Naive thymus-derived CD4-positive, alpha-beta T cell (primary cell): ENCODE measurements at regions of chr12 and their contacts with region 1.

Region 1: GRCh38 chr12:112992541-112993398 is 14.5 kb downstream of the OAS2 start:
- DNase-seq: peak in 8 of 9 donors; percentile 29 to 58 (median 49)
- ATAC-seq: peak; percentile 83
- H3K4me3 ChIP-seq: no peak overlapping the region
- H3K4me3 Mint-ChIP-seq: peak overlapping the region in 1 of 10 donors; percentile 25
- H3K27ac ChIP-seq: no peak overlapping the region
- H3K27ac Mint-ChIP-seq: peak overlapping the region in 7 of 9 donors; percentile 5 to 72 (median 50)
- H3K4me1 ChIP-seq: peaks cover 0 to 5% of the 10 kb centered on the region in 2 donors
- H3K4me1 Mint-ChIP-seq: peaks cover 11 to 62% (median 21%) of the 10 kb centered on the region in 7 donors
- H3K27me3 ChIP-seq: no peaks in the 10 kb centered on the region
- H3K27me3 Mint-ChIP-seq: no peaks in the 10 kb centered on the region

Region 2: GRCh38 chr12:112978163-112979040 is 14.4 kb before region 1 on chr12 and contains the start of gene OAS2:
- CTCF ChIA-PET with region 1: interaction called, 61 read pairs
- POLR2A ChIA-PET with region 1: interaction called, 36 read pairs
- intact Hi-C with region 1: loop called (anchors 1 kb)
- DNase-seq: peak; percentile 35 to 89 (median 85)
- ATAC-seq: peak; percentile 97
- H3K4me3 ChIP-seq: peak within 1 kb of the TSS; percentile 99
- H3K4me3 Mint-ChIP-seq: peak within 1 kb of the TSS; percentile 87 to 100 (median 96)
- H3K27ac ChIP-seq: peak within 1 kb of the TSS; percentile 89
- H3K27ac Mint-ChIP-seq: peak within 1 kb of the TSS; percentile 97 to 100 (median 99)
- H3K4me1 ChIP-seq: peaks cover 34 to 37% of the 10 kb centered on the region in 2 donors
- H3K4me1 Mint-ChIP-seq: peaks cover 30 to 59% (median 42%) of the 10 kb centered on the region in 7 donors
- H3K27me3 ChIP-seq: no peaks in the 10 kb centered on the region
- H3K27me3 Mint-ChIP-seq: no peaks in the 10 kb centered on the region
- total RNA-seq, gene OAS2: 29.9 to 238 (median 66.0) TPM

Region 3: GRCh38 chr12:113030875-113031525 is 38.2 kb after region 1 on chr12:
- CTCF ChIA-PET with region 1: interaction called, 8 read pairs
- POLR2A ChIA-PET with region 1: no interaction called
- intact Hi-C with region 1: loop called in 1 of 2 experiments (anchors 1 kb)
- DNase-seq: peak in 4 of 9 donors; percentile 12 to 30 (median 14)
- ATAC-seq: peak; percentile 63
- H3K4me3 ChIP-seq: no peak overlapping the region
- H3K4me3 Mint-ChIP-seq: no peak overlapping the region
- H3K27ac ChIP-seq: no peak overlapping the region
- H3K27ac Mint-ChIP-seq: peak overlapping the region in 1 of 9 donors; percentile 28
- H3K4me1 ChIP-seq: no peaks in the 10 kb centered on the region
- H3K4me1 Mint-ChIP-seq: peaks cover 0 to 8% (median 3%) of the 10 kb centered on the region in 7 donors
- H3K27me3 ChIP-seq: no peaks in the 10 kb centered on the region
- H3K27me3 Mint-ChIP-seq: peaks cover 0 to 24% (median 0%) of the 10 kb centered on the region in 5 donors

Region 4: DNA sequence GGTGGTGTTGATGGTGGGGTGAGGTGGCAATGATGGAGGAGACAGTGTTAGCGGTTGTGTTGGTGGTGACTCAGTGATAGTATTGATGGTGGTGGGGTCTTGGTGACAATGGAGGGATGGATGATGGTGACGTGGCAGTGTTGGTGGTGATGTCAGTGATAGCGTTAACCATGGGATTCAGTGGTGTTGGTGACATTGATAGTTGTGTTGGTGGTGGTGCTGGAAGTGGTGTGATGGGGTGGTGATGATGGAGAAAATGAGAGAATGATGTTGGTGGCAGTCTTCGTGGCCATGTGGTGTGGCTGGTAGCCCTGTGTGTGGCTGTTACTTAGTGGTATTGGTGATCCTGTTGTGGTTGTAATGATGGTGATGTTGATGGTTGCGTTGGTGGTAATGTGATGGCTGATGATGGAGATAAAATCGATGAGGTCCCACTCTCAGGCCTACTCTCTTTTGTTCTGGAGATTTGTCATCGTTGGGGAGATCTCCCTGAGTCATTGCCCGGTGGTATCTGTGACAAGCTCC is 66.4 kb after region 1 on chr12:
- CTCF ChIA-PET with region 1: no interaction called
- POLR2A ChIA-PET with region 1: no interaction called
- intact Hi-C with region 1: no loop called
- DNase-seq: no peak
- ATAC-seq: no peak
- H3K4me3 ChIP-seq: no peak overlapping the region
- H3K4me3 Mint-ChIP-seq: no peak overlapping the region
- H3K27ac ChIP-seq: peak overlapping the region; percentile 10
- H3K27ac Mint-ChIP-seq: no peak overlapping the region
- H3K4me1 ChIP-seq: peaks cover 4 to 51% of the 10 kb centered on the region in 2 donors
- H3K4me1 Mint-ChIP-seq: peaks cover 0 to 58% (median 28%) of the 10 kb centered on the region in 7 donors
- H3K27me3 ChIP-seq: no peaks in the 10 kb centered on the region
- H3K27me3 Mint-ChIP-seq: peaks cover 0 to 23% (median 0%) of the 10 kb centered on the region in 5 donors

Region 5: DNA sequence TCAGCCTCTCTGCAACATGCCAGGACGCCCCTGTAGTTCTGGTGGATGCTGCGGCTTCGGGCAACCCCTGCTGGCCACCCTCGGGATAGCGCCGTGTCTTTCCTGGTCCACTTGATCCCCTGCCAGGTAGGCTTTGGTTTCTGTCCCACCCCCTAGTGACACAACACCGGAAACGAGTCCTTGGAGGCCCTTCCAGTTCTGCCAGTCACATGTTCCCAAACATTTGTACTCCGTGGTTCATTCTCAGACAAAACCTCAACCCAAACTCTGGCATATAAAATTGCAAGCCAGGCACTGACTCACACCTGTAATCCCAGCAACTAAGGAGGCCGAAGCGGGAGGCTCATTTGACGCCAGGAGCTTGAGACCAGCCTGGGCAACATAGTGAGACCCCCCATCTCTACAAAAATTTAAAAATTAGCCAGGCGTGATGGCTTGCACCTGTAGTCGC is 105.7 kb after region 1 on chr12:
- CTCF ChIA-PET with region 1: interaction called, 7 read pairs
- POLR2A ChIA-PET with region 1: no interaction called
- intact Hi-C with region 1: loop called (anchors 1 to 5 kb)
- DNase-seq: peak; percentile 42 to 70 (median 61)
- ATAC-seq: peak; percentile 83
- H3K4me3 ChIP-seq: no peak overlapping the region
- H3K4me3 Mint-ChIP-seq: no peak overlapping the region
- H3K27ac ChIP-seq: peak overlapping the region; percentile 34
- H3K27ac Mint-ChIP-seq: peak overlapping the region in 8 of 9 donors; percentile 31 to 92 (median 70)
- H3K4me1 ChIP-seq: peaks cover 0 to 18% of the 10 kb centered on the region in 2 donors
- H3K4me1 Mint-ChIP-seq: peaks cover 0 to 43% (median 33%) of the 10 kb centered on the region in 7 donors
- H3K27me3 ChIP-seq: no peaks in the 10 kb centered on the region
- H3K27me3 Mint-ChIP-seq: no peaks in the 10 kb centered on the region

Region 6: DNA sequence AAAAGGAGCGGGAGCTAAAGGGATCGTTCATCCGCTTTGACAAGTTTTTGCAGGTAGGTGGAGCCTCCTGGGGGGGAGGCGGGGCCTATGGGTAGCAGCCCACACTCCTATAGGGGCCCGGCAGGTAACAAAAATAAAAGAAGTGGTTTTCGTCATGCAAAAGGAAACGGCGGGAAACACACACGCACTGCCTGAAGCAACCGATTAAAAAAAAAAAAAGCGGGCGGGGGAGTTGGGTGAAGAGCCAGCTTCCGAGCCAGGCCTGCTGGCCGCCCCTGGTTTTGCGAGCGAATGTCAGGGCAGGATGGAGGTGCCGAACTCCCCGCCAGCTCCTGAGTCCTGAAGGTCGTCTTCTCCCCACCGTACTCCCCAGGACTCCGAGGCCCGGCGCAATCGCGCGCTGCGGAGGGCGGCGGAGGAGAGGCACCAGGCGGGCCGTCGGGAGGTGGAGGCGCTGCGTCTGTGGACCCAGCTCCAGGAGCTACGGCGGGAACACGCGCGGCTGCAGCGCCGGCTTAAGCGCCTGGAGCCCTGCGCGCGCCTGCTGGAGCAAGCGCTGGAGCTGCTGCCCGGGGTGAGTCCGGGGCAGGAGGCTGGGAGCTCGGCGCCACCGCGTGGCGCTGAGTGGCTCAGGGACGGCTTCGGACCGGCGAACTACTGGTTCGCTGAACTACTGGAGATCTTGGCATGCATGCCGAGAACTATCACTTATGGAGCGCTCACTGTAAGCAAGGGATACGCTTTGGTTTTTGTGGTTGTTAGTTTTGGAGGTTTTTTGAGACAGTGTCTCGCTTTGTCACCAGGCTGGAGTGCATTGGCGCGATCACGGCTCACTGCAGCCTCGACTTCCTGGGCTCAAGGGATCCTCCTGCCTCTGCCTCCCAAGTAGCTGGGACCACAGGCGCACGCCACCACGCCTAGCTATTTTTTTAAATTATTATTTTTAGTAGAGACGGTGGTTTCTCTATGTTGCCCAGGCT is 160.4 kb after region 1 on chr12:
- CTCF ChIA-PET with region 1: interaction called, 7 read pairs
- POLR2A ChIA-PET with region 1: no interaction called
- intact Hi-C with region 1: loop called in 1 of 2 experiments (anchors 2 kb)
- DNase-seq: peak; percentile 36 to 86 (median 80)
- ATAC-seq: peak; percentile 94
- H3K4me3 ChIP-seq: peak overlapping the region; percentile 75
- H3K4me3 Mint-ChIP-seq: peak overlapping the region; percentile 76 to 88 (median 86)
- H3K27ac ChIP-seq: no peak overlapping the region
- H3K27ac Mint-ChIP-seq: peak overlapping the region in 6 of 9 donors; percentile 76 to 93 (median 85)
- H3K4me1 ChIP-seq: peaks cover 0 to 19% of the 10 kb centered on the region in 2 donors
- H3K4me1 Mint-ChIP-seq: peaks cover 0 to 27% (median 25%) of the 10 kb centered on the region in 7 donors
- H3K27me3 ChIP-seq: no peaks in the 10 kb centered on the region
- H3K27me3 Mint-ChIP-seq: peaks cover 0 to 36% (median 0%) of the 10 kb centered on the region in 5 donors

Region 7: GRCh38 chr12:113174461-113175384 is 182.0 kb after region 1 on chr12:
- CTCF ChIA-PET with region 1: interaction called, 21 read pairs
- POLR2A ChIA-PET with region 1: no interaction called
- intact Hi-C with region 1: loop called in 1 of 2 experiments (anchors 1 kb)
- DNase-seq: peak; percentile 52 to 84 (median 66)
- ATAC-seq: peak; percentile 92
- H3K4me3 ChIP-seq: no peak overlapping the region
- H3K4me3 Mint-ChIP-seq: no peak overlapping the region
- H3K27ac ChIP-seq: no peak overlapping the region
- H3K27ac Mint-ChIP-seq: peak overlapping the region in 5 of 9 donors; percentile 2 to 77 (median 55)
- H3K4me1 ChIP-seq: no peaks in the 10 kb centered on the region
- H3K4me1 Mint-ChIP-seq: peaks cover 2 to 10% (median 6%) of the 10 kb centered on the region in 7 donors
- H3K27me3 ChIP-seq: no peaks in the 10 kb centered on the region
- H3K27me3 Mint-ChIP-seq: no peaks in the 10 kb centered on the region